Caco-2 (cell line): ENCODE measurements at regions of chr3 and their contacts with region 1.

Region 1: DNA sequence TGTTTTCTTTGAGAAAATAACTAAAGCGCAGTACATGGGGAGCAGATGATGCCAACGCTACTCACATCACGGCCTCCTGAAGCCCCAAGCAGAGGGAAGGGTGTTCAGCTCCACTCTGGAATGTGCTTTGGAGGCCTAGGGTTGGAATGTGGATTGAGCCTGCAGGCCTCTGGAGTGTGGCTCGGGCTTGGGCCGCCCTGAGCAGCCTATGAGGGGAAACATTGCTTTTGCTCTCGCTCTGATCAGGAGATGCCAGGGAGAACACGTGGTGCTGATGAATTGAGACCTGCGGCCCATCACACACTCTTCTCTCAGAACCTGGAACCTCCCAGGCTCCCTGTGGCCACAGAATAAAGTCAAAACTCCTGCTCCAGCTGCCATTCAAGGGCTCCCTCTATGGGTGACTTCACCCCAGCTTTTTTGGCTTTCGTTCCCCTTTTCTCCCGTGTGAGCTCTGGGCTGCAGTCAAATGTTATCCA is 23.3 kb downstream of the CCDC13 start:
- DNase-seq: peak in 1 of 2 experiments; percentile 17
- H3K4me3 ChIP-seq: no peak overlapping the region
- H3K4me3 Mint-ChIP-seq: no peak overlapping the region
- H3K27ac Mint-ChIP-seq: no peak overlapping the region
- H3K4me1 ChIP-seq: no peaks in the 10 kb centered on the region
- H3K4me1 Mint-ChIP-seq: no peaks in the 10 kb centered on the region
- H3K27me3 ChIP-seq: no peaks in the 10 kb centered on the region
- H3K27me3 Mint-ChIP-seq: no peaks in the 10 kb centered on the region
- CTCF ChIP-seq: peak; percentile 37 to 52

Region 2: GRCh38 chr3:42660893-42661292 is 88.9 kb before region 1 on chr3:
- CTCF ChIA-PET with region 1: no interaction called
- POLR2A ChIA-PET with region 1: no interaction called
- intact Hi-C with region 1: loop called (anchors 2 kb)
- DNase-seq: no peak
- H3K4me3 ChIP-seq: no peak overlapping the region
- H3K4me3 Mint-ChIP-seq: no peak overlapping the region
- H3K27ac Mint-ChIP-seq: no peak overlapping the region
- H3K4me1 ChIP-seq: no peaks in the 10 kb centered on the region
- H3K4me1 Mint-ChIP-seq: no peaks in the 10 kb centered on the region
- H3K27me3 ChIP-seq: no peaks in the 10 kb centered on the region
- H3K27me3 Mint-ChIP-seq: no peaks in the 10 kb centered on the region
- CTCF ChIP-seq: no peak

Region 3: GRCh38 chr3:42680271-42680670 is 69.5 kb before region 1 on chr3:
- CTCF ChIA-PET with region 1: no interaction called
- POLR2A ChIA-PET with region 1: no interaction called
- intact Hi-C with region 1: no loop called
- DNase-seq: no peak
- H3K4me3 ChIP-seq: no peak overlapping the region
- H3K4me3 Mint-ChIP-seq: no peak overlapping the region
- H3K27ac Mint-ChIP-seq: no peak overlapping the region
- H3K4me1 ChIP-seq: no peaks in the 10 kb centered on the region
- H3K4me1 Mint-ChIP-seq: no peaks in the 10 kb centered on the region
- H3K27me3 ChIP-seq: no peaks in the 10 kb centered on the region; the same call in 1 of the 2 replicates
- H3K27me3 Mint-ChIP-seq: peaks cover 16% of the 10 kb centered on the region
- CTCF ChIP-seq: no peak